Mammary epithelial cell (primary cell): ENCODE measurements at regions of chr15 and their contacts with region 1.

Region 1: DNA sequence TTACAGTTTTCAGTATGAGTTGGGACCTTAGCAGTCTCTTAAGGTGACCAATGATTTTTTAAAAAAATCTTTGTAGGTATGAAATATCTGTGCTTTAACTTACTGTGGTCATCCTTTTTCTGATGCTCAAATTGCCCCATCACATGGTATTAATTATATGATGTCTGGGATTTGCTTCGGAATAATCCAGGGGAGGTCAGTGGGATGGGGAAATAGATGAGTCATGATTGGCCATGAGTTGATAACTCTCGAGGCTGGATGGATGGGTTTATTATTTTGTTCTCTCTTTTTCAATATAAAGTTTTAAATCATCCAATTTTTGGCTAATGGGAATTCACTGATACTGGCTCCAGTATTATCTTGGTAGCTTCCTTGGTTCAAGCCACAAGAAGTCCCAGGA is 370.3 kb upstream of the TPM1 start:
- DNase-seq: no peak
- H3K4me3 ChIP-seq: no peak overlapping the region
- H3K27ac ChIP-seq: no peak overlapping the region
- H3K4me1 ChIP-seq: no peaks in the 10 kb centered on the region
- H3K27me3 ChIP-seq: no peaks in the 10 kb centered on the region
- CTCF ChIP-seq: no peak

Region 2: DNA sequence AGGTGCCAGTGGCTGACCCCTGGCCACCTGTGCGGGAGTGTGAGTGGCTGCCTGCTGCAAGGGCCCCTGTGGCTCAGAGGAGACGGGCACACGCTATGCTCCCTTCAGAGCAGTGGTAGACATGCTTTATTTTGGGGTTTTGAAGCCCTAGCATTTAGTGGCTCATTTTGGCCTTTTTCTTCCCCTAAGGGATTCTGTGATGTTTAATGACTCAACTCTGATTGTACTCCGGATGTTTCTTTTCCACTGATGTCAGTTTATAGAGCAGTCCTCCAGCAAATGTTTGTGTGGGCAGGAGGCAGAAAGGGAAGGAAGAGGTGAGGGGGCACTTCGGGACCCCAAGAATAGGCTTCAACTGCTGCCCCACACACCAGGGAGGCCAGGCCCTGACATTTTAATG is 218.3 kb before region 1 on chr15:
- CTCF ChIA-PET with region 1: interaction called, 10 read pairs
- dilution Hi-C with region 1: no loop called
- in situ Hi-C with region 1: no loop called
- intact Hi-C with region 1: no loop called
- DNase-seq: peak; percentile 57
- H3K4me3 ChIP-seq: no peak overlapping the region
- H3K27ac ChIP-seq: no peak overlapping the region
- H3K4me1 ChIP-seq: peaks cover 27% of the 10 kb centered on the region
- H3K27me3 ChIP-seq: no peaks in the 10 kb centered on the region
- CTCF ChIP-seq: no peak

Region 3: DNA sequence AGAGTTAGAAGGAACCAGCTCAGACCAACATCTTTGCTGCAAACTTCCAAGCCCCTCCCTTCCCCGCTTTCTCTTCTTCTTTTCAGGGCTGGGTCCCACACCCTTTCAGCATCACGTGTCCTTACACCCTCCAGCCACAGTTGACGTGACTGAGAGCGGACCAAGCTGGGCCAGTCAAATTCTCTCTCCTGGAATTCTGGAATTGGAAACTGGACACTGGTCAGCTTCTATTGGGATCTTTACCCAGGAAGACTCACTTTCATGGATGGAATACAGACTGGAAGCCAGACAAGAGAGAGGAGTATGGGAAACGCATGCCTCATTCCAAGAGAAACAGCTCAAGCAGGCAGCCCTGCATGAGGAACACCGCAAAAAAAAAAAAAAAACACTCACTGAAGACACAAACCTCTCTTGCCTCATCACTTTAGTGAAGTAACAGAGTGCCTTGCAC is 357.9 kb after region 1 on chr15:
- CTCF ChIA-PET with region 1: no interaction called
- dilution Hi-C with region 1: no loop called
- in situ Hi-C with region 1: no loop called
- intact Hi-C with region 1: no loop called
- DNase-seq: no peak
- H3K4me3 ChIP-seq: no peak overlapping the region
- H3K27ac ChIP-seq: no peak overlapping the region
- H3K4me1 ChIP-seq: no peaks in the 10 kb centered on the region
- H3K27me3 ChIP-seq: no peaks in the 10 kb centered on the region
- CTCF ChIP-seq: no peak